HEK293 (cell line): ENCODE measurements at regions of chr10 and their contacts with region 1.

Region 1: GRCh38 chr10:53209944-53210611 is 437.5 kb upstream of the MBL2 start:
- H3K4me3 ChIP-seq: no peak overlapping the region
- H3K27ac ChIP-seq: no peak overlapping the region
- H3K4me1 ChIP-seq: no peaks in the 10 kb centered on the region
- CTCF ChIP-seq: no peak

Region 2: DNA sequence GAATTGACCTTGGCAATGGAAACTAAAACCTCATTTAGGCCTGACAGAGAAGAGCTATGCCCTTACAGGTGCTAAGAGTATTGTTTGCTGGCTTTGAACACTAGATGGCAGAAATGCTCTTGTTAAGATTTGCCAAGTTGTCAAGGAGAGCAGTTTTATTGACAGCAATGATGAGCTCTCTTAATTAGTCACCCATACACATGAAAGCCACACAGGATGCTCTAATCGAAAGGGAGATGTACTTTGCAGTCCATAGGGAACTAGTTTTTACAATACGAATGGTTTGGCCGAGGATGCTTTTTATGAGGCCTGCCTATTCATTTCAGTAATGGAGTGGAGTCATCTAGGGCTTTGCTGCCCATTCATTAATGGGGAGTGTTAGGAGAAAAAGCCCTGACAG is 392.1 kb before region 1 on chr10:
- CTCF ChIA-PET with region 1: interaction called, 12 read pairs
- POLR2A ChIA-PET with region 1: no interaction called
- H3K4me3 ChIP-seq: no peak overlapping the region
- H3K27ac ChIP-seq: no peak overlapping the region
- H3K4me1 ChIP-seq: no peaks in the 10 kb centered on the region
- CTCF ChIP-seq: peak; percentile 20; the same call in 1 of the 2 replicates

Region 3: GRCh38 chr10:52877451-52877850 is 332.6 kb before region 1 on chr10:
- CTCF ChIA-PET with region 1: no interaction called
- POLR2A ChIA-PET with region 1: no interaction called
- H3K4me3 ChIP-seq: no peak overlapping the region
- H3K27ac ChIP-seq: no peak overlapping the region
- H3K4me1 ChIP-seq: no peaks in the 10 kb centered on the region
- CTCF ChIP-seq: no peak

Region 4: GRCh38 chr10:52951824-52952223 is 258.3 kb before region 1 on chr10:
- CTCF ChIA-PET with region 1: interaction called, 13 read pairs
- POLR2A ChIA-PET with region 1: no interaction called
- H3K4me3 ChIP-seq: no peak overlapping the region
- H3K27ac ChIP-seq: no peak overlapping the region
- H3K4me1 ChIP-seq: no peaks in the 10 kb centered on the region
- CTCF ChIP-seq: no peak

Region 5: GRCh38 chr10:53088961-53089360 is 121.1 kb before region 1 on chr10:
- CTCF ChIA-PET with region 1: no interaction called
- POLR2A ChIA-PET with region 1: no interaction called
- H3K4me3 ChIP-seq: no peak overlapping the region
- H3K27ac ChIP-seq: no peak overlapping the region
- H3K4me1 ChIP-seq: no peaks in the 10 kb centered on the region
- CTCF ChIP-seq: no peak

Region 6: DNA sequence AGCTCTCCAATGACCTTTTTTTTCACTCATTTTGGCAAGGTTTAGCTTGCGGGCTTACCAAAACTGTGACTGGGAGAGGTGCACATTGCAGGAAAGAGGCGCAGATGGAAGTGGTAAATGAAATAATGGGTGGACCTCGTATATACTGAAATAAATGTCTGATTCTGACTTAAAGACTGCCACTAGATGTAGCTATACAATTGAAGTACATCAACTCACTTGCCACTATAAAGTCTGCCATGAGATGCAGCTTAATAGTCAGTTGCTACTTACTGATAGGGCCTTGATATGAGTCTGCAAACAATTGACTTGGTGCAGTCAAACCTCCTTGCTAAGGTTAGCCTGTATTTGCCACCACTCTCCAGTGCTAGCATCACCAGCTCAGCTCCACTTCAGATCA is 88.4 kb after region 1 on chr10:
- CTCF ChIA-PET with region 1: no interaction called
- POLR2A ChIA-PET with region 1: no interaction called
- H3K4me3 ChIP-seq: no peak overlapping the region
- H3K27ac ChIP-seq: no peak overlapping the region
- H3K4me1 ChIP-seq: no peaks in the 10 kb centered on the region
- CTCF ChIP-seq: no peak